ENCODE measurements at regions of chr2 and their contacts with region 1.

Region 1: GRCh38 chr2:58046585-58047372 is at the start of gene VRK2:
- DNase-seq: peak; percentile 96
- total RNA-seq, gene VRK2: 27.7 to 41.0 TPM

Region 2: GRCh38 chr2:58215429-58215828 is 168.7 kb after region 1 on chr2:
- intact Hi-C with region 1: loop called in 1 of 2 experiments (anchors 10 kb)
- DNase-seq: no peak

Measured in posterior vena cava (tissue), 2 donors.